ENCODE measurements at regions of chr6 and their contacts with region 1.

Region 1: DNA sequence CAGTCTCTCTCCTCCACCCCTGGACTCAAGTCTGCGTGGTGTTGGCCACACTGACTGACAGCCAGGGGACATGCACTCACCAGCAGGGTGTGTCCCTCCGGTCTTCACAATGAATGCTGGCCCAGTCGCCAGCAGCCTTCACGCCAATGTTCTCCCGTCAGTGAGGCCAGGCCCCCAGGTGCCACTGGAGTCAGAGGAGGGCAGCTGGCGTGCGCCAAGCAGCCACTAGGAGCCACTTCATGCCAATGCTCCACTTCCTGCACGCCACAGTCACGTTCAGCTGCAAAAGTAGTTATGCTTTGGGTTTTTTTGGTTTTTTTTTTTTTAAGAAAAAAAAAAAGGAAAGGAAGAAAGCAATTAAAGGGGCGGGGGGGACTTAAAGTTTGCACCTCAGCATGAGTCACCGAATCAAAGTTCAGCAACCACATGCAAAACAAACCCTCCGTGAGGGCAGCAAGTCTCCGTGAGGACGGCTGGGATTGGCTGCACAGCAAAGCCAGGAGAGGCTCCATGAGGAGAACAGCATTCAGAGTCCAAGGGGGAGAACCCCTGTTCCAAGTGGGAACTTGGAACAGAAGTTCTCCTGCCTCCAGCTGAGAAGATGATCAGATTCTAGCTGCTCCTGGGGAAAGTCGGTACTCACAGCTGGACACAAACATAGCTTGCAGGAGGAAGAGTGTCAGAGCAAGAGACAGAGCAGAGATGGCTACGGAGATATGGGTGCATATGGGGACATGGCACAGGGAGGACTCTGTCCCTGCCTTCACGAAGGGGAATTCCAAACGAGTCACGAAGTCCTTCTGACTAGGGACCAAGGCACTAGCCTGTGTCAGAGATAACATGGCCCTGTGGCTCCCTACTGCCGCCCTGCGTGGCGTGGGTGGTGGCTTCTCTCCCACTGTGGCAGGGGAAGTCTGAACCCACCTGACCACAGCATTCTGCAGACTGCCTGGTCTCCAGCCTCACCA is at the start of gene ZC3H12D:
- H3K4me3 Mint-ChIP-seq: peak within 1 kb of the TSS; percentile 76
- H3K27ac Mint-ChIP-seq: peak within 1 kb of the TSS; percentile 99
- H3K4me1 Mint-ChIP-seq: peaks cover 75% of the 10 kb centered on the region
- H3K27me3 Mint-ChIP-seq: no peaks in the 10 kb centered on the region

Region 2: DNA sequence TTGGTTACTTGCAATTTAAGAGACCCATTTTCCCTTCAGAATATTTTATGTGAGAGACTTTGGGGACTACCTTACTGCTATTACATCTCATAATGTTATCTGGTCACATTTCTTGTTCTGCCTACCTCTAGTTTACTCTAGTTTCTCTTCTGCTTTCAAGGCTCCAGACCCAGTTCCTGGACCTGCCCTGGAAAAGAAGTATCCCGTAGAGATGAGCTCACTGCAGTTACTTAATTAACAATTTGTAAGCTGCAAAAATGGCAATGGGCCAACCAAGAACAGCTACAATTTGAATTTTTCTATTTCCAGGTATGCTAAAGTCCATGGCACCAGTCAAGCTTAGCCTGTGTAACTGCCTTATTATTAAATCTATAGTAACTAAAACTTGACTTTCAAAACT is 142.5 kb before region 1 on chr6:
- intact Hi-C with region 1: no loop called
- H3K4me3 Mint-ChIP-seq: no peak overlapping the region
- H3K27ac Mint-ChIP-seq: peak overlapping the region; percentile 25
- H3K4me1 Mint-ChIP-seq: peaks cover 52% of the 10 kb centered on the region
- H3K27me3 Mint-ChIP-seq: no peaks in the 10 kb centered on the region

Region 3: GRCh38 chr6:149454386-149454848 is 30.6 kb before region 1 on chr6:
- intact Hi-C with region 1: loop called (anchors 5 kb)
- H3K4me3 Mint-ChIP-seq: peak overlapping the region; percentile 13
- H3K27ac Mint-ChIP-seq: peak overlapping the region; percentile 87
- H3K4me1 Mint-ChIP-seq: peaks cover 64% of the 10 kb centered on the region
- H3K27me3 Mint-ChIP-seq: no peaks in the 10 kb centered on the region